Heart right ventricle (tissue), 16 donors: ENCODE measurements at regions of chr22 and their contacts with region 1.

Region 1: DNA sequence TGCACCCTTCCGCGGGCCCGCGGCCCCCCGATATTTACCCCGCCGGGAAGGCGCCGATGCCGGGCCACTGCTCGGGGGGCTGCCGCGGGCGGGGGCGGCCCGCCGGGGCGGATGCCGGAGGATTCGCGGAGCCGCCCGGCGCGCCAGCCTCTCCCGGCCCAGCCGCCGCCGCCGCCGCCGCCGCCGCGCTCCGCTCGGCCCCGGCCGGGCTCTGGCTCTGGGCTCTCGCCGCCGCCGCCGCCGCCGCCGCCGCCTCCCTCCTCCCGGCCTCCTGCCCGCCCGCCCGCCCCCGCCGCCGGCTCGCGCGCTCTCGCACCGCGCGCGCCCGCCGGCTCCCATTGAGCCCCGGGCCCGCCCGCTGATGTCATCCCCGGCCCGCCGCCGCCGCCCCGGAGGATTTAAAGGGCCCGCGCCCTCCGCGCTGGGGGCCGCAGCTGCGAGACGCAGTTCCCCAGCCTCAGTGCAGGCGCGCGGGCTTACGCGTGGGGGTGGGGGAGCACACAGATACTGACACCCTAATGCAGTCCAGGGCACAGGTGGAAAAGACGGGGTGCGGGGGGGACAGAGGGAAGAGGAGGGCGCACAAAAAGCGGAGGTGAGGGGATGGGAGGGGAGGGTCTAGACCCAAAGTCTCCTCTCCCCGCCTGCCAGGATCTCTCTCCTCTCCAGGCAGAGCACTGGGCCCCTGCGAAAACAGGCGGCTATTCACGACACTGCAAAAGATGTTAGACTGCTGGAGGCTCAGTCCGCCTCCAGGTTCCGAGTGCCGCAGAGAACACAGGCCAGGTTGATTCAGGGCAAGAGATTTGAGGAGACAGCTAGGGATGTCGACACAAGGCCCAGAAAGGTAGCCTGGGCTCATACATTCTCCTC is at the start of gene CSNK1E:
- DNase-seq: peak; percentile 83 to 86
- ATAC-seq: peak; percentile 67 to 78 (median 71)
- H3K4me3 ChIP-seq: peak within 1 kb of the TSS; percentile 75 to 96 (median 88)
- H3K27ac ChIP-seq: peak within 1 kb of the TSS; percentile 96 to 100 (median 99)
- H3K4me1 ChIP-seq: peaks cover 34 to 56% (median 49%) of the 10 kb centered on the region in 9 donors
- H3K27me3 ChIP-seq: no peaks in the 10 kb centered on the region
- CTCF ChIP-seq: no peak
- total RNA-seq, gene CSNK1E: 64.1 to 88.1 (median 78.6) TPM

Region 2: DNA sequence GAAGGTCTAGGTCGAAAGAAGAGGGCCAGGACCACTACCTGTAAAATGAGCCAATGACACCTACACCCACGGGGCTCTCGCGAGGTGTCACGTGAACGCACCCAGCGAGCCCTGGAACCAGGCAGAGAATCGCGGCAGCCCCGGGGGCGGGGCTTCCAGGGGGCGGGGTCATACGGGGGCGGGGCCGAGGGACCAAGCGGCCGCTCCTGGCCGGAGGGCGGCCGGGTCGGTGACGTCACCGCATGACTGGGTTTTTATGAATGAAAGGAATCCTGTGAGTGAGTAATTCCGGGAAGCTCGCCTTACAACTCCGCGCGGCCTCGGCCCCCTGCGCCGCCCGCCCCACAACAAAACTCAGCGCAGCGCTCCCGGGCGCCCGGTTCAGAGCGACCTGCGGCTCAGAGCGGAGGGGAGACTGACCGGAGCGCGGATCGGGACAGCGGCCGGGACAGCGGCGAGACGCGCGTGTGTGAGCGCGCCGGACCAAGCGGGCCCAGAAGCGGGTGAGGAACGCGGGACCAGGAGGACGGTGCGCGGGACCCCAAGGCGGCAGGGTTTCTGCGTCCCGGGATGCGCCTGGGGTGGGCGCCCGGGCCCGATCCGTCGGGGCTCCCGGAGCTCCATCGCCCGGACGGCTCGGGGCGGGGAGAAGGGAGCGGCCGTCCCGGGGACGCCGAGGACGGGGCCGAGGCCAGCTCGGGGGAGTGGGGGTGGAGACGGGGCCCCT is 115.5 kb before region 1 on chr22 and contains the start of gene MAFF:
- intact Hi-C with region 1: loop called in 2 of 10 experiments (anchors 10 kb)
- DNase-seq: peak; percentile 95 to 96
- ATAC-seq: peak; percentile 81 to 90 (median 87)
- H3K4me3 ChIP-seq: peak within 1 kb of the TSS; percentile 67 to 97 (median 84)
- H3K27ac ChIP-seq: peak within 1 kb of the TSS; percentile 94 to 100 (median 99)
- H3K4me1 ChIP-seq: peaks cover 17 to 42% (median 31%) of the 10 kb centered on the region in 9 donors
- H3K27me3 ChIP-seq: no peaks in the 10 kb centered on the region
- CTCF ChIP-seq: no peak
- total RNA-seq, gene MAFF: 2.9 to 21.2 (median 5.3) TPM

Region 3: DNA sequence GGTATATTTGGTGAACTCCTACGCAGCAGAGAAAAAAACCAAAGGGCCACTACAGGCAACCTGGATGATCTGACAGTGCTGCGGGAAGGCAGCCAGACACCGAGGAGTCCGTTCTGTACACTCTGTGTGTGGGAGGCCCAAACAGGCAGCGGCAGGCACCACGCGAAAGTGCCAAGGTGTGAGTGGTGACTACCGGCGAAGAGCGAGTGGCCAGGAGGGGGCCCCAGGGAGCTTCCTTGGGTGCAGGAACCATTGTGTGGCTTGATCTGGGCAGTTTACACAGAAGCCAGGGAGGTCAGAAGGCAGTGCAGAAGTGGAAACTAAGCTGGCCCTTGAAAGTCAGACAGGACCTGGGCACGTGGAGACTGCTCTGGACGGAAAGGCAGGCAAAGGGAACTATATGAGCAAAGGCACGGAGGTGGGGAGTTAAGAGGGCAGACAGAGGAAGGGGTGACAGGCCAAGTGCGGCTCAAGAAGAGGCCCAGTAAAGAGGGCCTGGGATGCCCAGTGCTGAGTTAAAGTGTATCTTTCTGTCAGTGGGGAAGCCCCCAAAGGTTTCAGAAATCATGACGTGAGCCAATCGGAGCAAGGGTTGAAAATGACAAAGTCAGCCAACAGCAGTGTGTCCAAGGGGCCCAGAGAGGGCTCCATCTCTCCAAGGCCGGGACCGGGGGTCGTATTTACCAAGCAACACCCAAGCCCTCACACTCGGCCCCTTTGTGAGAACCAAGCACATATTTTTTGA is 55.1 kb before region 1 on chr22:
- intact Hi-C with region 1: loop called in 3 of 10 experiments (anchors 2 to 5 kb)
- DNase-seq: peak in 1 of 2 donors; percentile 69
- ATAC-seq: peak; percentile 31 to 55 (median 44)
- H3K4me3 ChIP-seq: no peak overlapping the region
- H3K27ac ChIP-seq: peak overlapping the region; percentile 21 to 93 (median 80)
- H3K4me1 ChIP-seq: peaks cover 33 to 96% (median 87%) of the 10 kb centered on the region in 9 donors
- H3K27me3 ChIP-seq: no peaks in the 10 kb centered on the region
- CTCF ChIP-seq: peak; percentile 39 to 75 (median 63)

Region 4: DNA sequence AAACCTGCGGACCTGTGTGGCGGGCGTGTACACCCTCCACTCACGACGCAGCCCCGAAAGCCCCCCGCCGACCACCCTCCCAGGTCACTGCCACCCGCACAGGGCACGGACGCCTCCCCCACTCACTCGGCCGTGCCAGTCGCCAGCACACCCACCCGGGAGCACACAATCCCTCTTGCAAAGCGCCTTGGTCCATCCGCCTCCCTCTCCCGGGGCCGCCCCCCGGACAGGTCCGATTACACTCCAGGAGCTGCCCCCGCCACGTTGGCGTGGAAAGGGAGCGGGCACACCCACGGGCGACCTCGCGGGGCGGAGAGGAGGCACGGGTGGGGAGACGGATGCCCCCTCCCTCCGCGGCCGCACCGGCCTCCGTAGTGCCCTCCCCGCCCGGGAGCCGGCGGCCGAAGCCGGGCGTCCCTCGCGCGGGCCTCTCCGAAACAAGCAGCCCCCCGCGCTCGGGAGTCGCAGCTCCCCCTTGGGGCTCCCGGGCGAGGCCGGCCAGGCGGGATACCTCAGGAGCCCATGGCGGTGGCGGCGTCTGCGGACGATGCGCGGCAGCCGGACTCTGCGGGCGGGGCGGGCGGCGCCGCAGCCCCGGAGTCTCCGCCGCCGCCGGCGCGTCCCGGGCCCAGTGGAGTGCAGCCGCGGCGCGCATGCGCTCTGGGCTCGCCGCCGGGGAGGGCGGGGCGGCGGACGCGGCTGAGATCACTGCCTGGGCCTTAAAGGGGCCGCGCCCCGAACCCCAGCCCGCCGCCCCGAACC is 44.8 kb before region 1 on chr22 and contains the start of gene TMEM184B:
- intact Hi-C with region 1: loop called in 9 of 10 experiments (anchors 2 to 5 kb)
- DNase-seq: peak; percentile 71 to 84
- ATAC-seq: peak; percentile 86 to 97 (median 92)
- H3K4me3 ChIP-seq: peak within 1 kb of the TSS; percentile 87 to 100 (median 96)
- H3K27ac ChIP-seq: peak within 1 kb of the TSS; percentile 89 to 99 (median 97)
- H3K4me1 ChIP-seq: peaks cover 22 to 61% (median 51%) of the 10 kb centered on the region in 9 donors
- H3K27me3 ChIP-seq: no peaks in the 10 kb centered on the region
- CTCF ChIP-seq: no peak
- total RNA-seq, gene TMEM184B: 36.2 to 51.6 (median 46.1) TPM